ENCODE measurements at regions of chr17 and their contacts with region 1.

Region 1: GRCh38 chr17:74864866-74865395 is 5.2 kb upstream of the GRIN2C start:
- DNase-seq: no peak
- H3K4me3 ChIP-seq: no peak overlapping the region
- H3K27me3 ChIP-seq: peaks cover 15% of the 10 kb centered on the region
- CTCF ChIP-seq: peak; percentile 96

Region 2: GRCh38 chr17:74690409-74690825 is 174.5 kb before region 1 on chr17:
- CTCF ChIA-PET with region 1: no interaction called
- POLR2A ChIA-PET with region 1: no interaction called
- DNase-seq: no peak
- H3K4me3 ChIP-seq: no peak overlapping the region
- H3K27me3 ChIP-seq: 0 out of 2 replicates have a peak, but pooled peaks cover 2% of the 10 kb centered on the region
- CTCF ChIP-seq: no peak

Region 3: DNA sequence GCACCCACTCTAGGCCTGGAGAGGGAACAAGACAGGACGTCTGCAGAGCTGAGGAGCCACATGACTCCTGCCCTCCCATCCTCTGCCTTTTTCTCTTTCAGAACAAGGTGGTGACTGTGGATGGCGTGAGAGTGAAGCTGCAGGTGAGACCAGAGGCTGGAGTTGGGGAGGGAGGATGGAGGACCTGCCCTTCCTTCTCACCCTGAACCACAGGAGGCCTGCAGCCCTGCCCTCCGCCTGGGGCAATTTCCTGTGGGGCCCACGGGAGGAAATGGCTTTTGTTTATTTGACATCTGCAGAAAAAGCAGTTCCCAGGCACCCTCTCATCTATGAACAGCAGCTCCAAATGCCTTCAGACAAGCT is 122.8 kb before region 1 on chr17:
- CTCF ChIA-PET with region 1: interaction called, 115 read pairs
- POLR2A ChIA-PET with region 1: no interaction called
- DNase-seq: no peak
- H3K4me3 ChIP-seq: no peak overlapping the region
- H3K27me3 ChIP-seq: peaks cover 21% of the 10 kb centered on the region
- CTCF ChIP-seq: no peak

Region 4: GRCh38 chr17:74759243-74759801 is 105.6 kb before region 1 on chr17:
- CTCF ChIA-PET with region 1: interaction called, 12 read pairs
- POLR2A ChIA-PET with region 1: no interaction called
- DNase-seq: no peak
- H3K4me3 ChIP-seq: no peak overlapping the region
- H3K27me3 ChIP-seq: no peaks in the 10 kb centered on the region
- CTCF ChIP-seq: no peak

Region 5: GRCh38 chr17:74842599-74843351 is 22.2 kb before region 1 on chr17:
- CTCF ChIA-PET with region 1: interaction called, 164 read pairs
- POLR2A ChIA-PET with region 1: no interaction called
- DNase-seq: no peak
- H3K4me3 ChIP-seq: peak overlapping the region; percentile 34
- H3K27me3 ChIP-seq: no peaks in the 10 kb centered on the region
- CTCF ChIP-seq: peak; percentile 40

Region 6: DNA sequence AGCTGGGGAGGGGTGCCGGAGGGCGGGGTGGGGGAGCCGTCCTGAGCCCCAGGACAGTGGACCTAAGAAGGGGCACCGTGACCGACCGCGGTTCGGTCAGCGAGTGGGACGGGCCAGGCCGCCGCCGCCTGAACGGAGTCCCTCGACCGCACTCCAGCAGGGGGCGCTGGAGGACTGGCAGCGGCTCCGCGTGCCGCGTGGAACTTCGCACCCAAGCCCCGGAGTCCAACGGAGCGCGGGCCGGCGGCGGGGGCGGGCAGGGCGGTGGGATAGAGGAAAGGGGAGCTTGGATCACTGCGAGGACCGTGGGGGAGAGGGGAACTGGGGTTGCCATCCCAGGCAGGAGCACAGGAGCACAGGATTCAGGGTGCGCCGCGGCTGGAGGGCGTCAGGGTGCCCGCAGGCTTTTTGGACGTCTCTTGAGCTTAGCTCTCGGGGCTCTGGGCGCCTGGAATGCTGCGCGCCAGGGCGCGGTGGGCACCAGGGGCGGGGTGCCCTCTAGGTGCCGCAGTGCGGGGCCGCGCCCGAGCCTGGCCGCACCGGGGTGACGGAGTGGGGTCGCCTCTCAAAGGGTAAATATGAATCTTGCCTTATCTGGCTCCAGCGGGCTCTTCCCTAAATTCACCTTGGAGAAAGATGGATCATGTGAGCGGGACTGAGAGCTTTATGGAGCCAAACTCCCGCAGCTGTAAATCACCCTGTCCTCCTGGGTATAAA is 58.8 kb after region 1 on chr17:
- CTCF ChIA-PET with region 1: no interaction called
- POLR2A ChIA-PET with region 1: no interaction called
- DNase-seq: no peak
- H3K4me3 ChIP-seq: no peak overlapping the region
- H3K27me3 ChIP-seq: peaks cover 41% of the 10 kb centered on the region
- CTCF ChIP-seq: peak; percentile 75

Measured in BJ (cell line).